WTC11 (cell line): ENCODE measurements at regions of chr7 and their contacts with region 1.

Region 1: GRCh38 chr7:43582503-43583423 is at the start of gene STK17A:
- DNase-seq: peak; percentile 92
- ATAC-seq: peak; percentile 93
- H3K4me3 Mint-ChIP-seq: peak within 1 kb of the TSS; percentile 85
- H3K27ac Mint-ChIP-seq: no peak within 1 kb of the TSS
- H3K4me1 Mint-ChIP-seq: peaks cover 41% of the 10 kb centered on the region
- H3K27me3 Mint-ChIP-seq: peaks cover 8% of the 10 kb centered on the region
- CTCF ChIP-seq: peak; percentile 91
- total RNA-seq, gene STK17A: 12.2 to 17.6 TPM (median 15.1 TPM) in 3 replicates

Region 2: GRCh38 chr7:43454936-43455518 is 127.7 kb before region 1 on chr7:
- CTCF ChIA-PET with region 1: interaction called, 33 read pairs
- POLR2A ChIA-PET with region 1: no interaction called
- DNase-seq: no peak
- ATAC-seq: peak; percentile 70
- H3K4me3 Mint-ChIP-seq: no peak overlapping the region
- H3K27ac Mint-ChIP-seq: peak overlapping the region; percentile 61; the same call in 1 of the 2 replicates
- H3K4me1 Mint-ChIP-seq: peaks cover 19% of the 10 kb centered on the region
- H3K27me3 Mint-ChIP-seq: no peaks in the 10 kb centered on the region
- CTCF ChIP-seq: peak; percentile 39; the same call in 1 of the 2 replicates

Region 3: DNA sequence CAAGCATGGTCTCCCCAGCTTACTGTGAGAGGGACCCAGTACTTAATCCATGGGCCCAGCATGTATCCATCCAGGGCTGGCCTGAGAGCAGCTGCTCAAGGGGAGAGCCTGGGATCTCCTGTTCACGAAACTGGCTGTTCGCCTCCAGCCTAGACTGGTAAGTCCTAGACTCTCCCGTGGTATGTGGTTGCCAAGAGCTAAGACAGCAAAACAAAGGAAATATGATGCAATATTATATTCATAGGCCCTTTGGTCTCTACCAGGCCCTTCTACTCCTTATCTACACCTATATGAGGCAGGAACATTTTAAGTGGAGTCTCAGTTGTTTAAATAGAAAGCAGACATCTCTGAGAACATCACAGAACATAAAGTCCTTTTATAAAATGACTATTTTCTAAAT is 28.8 kb before region 1 on chr7:
- CTCF ChIA-PET with region 1: interaction called, 28 read pairs
- POLR2A ChIA-PET with region 1: no interaction called
- DNase-seq: no peak
- ATAC-seq: no peak
- H3K4me3 Mint-ChIP-seq: no peak overlapping the region
- H3K27ac Mint-ChIP-seq: no peak overlapping the region
- H3K4me1 Mint-ChIP-seq: peaks cover 19% of the 10 kb centered on the region
- H3K27me3 Mint-ChIP-seq: no peaks in the 10 kb centered on the region
- CTCF ChIP-seq: no peak

Region 4: DNA sequence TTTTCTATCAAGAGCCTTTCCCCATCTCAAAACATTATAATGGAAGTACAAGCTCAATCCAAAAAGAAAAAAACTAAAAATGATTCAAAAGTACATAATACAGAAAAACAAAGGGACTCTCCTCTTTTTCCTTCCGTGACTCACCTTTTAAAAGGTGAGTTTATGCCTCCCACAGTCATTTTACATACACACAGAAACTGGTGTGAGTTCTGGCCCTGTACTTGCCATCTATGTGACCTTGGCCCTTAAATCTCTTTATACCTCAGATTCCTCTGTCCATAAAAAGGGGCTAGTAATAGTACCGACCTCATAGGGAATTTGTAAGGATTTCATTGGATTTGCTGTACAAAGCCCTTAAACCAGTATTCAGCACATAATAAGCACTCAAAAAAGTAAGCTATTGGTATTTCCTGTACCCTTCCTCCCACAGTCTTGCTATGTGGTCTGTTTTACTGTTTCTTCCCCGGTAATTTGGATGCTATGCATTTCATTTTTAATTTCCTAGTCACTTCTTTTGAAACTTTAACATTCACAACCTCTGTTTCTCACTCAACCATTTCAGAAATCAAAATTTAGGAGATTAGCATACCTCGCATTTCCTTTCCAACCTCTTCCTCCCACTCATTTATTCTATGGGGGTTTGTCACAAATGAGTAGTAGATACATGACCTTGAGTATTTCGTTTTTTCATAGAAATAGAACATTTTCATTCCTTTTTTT is 39.1 kb after region 1 on chr7:
- CTCF ChIA-PET with region 1: interaction called, 21 read pairs
- POLR2A ChIA-PET with region 1: interaction called, 6 read pairs
- DNase-seq: no peak
- ATAC-seq: no peak
- H3K4me3 Mint-ChIP-seq: no peak overlapping the region
- H3K27ac Mint-ChIP-seq: 0 out of 2 replicates have a peak overlapping the region, but pooled peaks have one; percentile 20
- H3K4me1 Mint-ChIP-seq: peaks cover 21% of the 10 kb centered on the region
- H3K27me3 Mint-ChIP-seq: no peaks in the 10 kb centered on the region
- CTCF ChIP-seq: no peak

Region 5: DNA sequence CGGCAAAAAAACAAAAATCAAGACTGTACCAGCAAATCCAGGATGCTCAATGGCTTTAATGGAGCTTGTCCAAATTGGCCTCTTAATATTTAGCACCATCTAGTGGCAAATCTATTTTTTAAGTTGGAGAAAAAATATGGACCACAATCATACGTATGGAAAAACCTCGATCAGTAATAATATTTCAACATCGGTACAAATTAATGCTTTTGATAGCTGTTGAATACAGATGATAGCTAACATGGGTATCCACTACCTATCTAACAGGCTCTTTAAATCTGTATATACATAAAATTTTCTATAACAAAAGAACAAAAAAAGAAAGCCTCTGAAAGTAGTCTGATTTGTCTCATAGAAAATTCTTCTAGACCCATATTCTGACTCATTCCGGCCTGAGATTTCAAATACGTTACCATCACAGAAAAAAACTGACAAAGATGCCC is 117.3 kb after region 1 on chr7:
- CTCF ChIA-PET with region 1: interaction called, 95 read pairs
- POLR2A ChIA-PET with region 1: interaction called, 6 read pairs
- DNase-seq: no peak
- ATAC-seq: no peak
- H3K4me3 Mint-ChIP-seq: no peak overlapping the region
- H3K27ac Mint-ChIP-seq: no peak overlapping the region
- H3K4me1 Mint-ChIP-seq: peaks cover 34% of the 10 kb centered on the region
- H3K27me3 Mint-ChIP-seq: no peaks in the 10 kb centered on the region
- CTCF ChIP-seq: no peak; the same call in 1 of the 2 replicates

Region 6: GRCh38 chr7:43764039-43764761 is 181.4 kb after region 1 on chr7:
- CTCF ChIA-PET with region 1: interaction called, 19 read pairs
- POLR2A ChIA-PET with region 1: no interaction called
- DNase-seq: no peak
- ATAC-seq: no peak
- H3K4me3 Mint-ChIP-seq: no peak overlapping the region
- H3K27ac Mint-ChIP-seq: peak overlapping the region; percentile 12
- H3K4me1 Mint-ChIP-seq: peaks cover 38% of the 10 kb centered on the region
- H3K27me3 Mint-ChIP-seq: peaks cover 12% of the 10 kb centered on the region
- CTCF ChIP-seq: no peak

Region 7: GRCh38 chr7:43869006-43869866 is 286.5 kb after region 1 on chr7 and contains the start of gene MRPS24:
- CTCF ChIA-PET with region 1: interaction called, 13 read pairs
- POLR2A ChIA-PET with region 1: interaction called, 5 read pairs
- DNase-seq: peak; percentile 93
- ATAC-seq: peak; percentile 92
- H3K4me3 Mint-ChIP-seq: peak within 1 kb of the TSS; percentile 89
- H3K27ac Mint-ChIP-seq: peak within 1 kb of the TSS; percentile 83
- H3K4me1 Mint-ChIP-seq: peaks cover 39% of the 10 kb centered on the region
- H3K27me3 Mint-ChIP-seq: peaks cover 2% of the 10 kb centered on the region; the same call in 1 of the 2 replicates
- CTCF ChIP-seq: no peak
- total RNA-seq, gene MRPS24: 132 to 141 TPM (median 135 TPM) in 3 replicates